Activated CD8-positive, alpha-beta T cell treated with anti-CD3 and anti-CD28 coated beads for 36 hours (primary cell): ENCODE measurements at regions of chr7 and their contacts with region 1.

Region 1: DNA sequence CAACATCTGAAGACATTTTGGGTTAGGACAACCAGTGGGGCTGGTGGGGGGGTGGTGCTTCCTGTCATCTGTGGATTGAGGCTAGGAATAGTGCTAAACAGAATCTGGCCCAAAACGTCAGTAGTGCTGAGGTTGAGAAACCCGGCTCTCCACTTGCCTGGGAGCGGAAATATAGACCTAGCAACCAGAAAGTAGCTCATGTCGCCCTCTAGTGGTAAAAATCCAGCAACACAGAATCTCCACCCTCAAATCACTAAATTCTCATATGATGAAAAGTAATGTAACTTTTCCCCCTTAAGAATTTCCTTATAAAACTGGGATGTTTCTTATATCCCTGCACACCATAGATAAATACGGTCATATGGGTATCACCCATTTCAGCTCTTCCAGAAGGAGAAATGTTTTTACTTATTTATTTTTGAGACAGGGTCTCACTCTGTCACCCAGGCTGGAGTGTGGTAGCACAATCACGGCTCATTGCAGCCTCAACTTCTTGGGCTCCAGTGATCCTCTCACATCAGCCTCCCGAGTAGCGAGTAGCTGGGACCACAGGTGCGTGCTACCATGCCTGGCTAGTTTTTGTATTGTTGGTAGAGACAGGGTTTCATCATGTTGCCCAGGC is 34.4 kb downstream of the ZC3HAV1 start:
- DNase-seq: peak; percentile 80
- ATAC-seq: peak; percentile 70
- H3K4me3 Mint-ChIP-seq: peak overlapping the region; percentile 37
- H3K27ac Mint-ChIP-seq: peak overlapping the region; percentile 85
- H3K4me1 Mint-ChIP-seq: peaks cover 62% of the 10 kb centered on the region
- H3K27me3 Mint-ChIP-seq: no peaks in the 10 kb centered on the region
- CTCF ChIP-seq: peak; percentile 80

Region 2: GRCh38 chr7:138954545-138955475 is 120.3 kb before region 1 on chr7:
- CTCF ChIA-PET with region 1: no interaction called
- POLR2A ChIA-PET with region 1: no interaction called
- intact Hi-C with region 1: no loop called
- DNase-seq: no peak
- ATAC-seq: no peak
- H3K4me3 Mint-ChIP-seq: no peak overlapping the region
- H3K27ac Mint-ChIP-seq: no peak overlapping the region
- H3K4me1 Mint-ChIP-seq: no peaks in the 10 kb centered on the region
- H3K27me3 Mint-ChIP-seq: peaks cover 1% of the 10 kb centered on the region
- CTCF ChIP-seq: no peak

Region 3: GRCh38 chr7:138999414-138999813 is 75.7 kb before region 1 on chr7:
- CTCF ChIA-PET with region 1: no interaction called
- POLR2A ChIA-PET with region 1: no interaction called
- intact Hi-C with region 1: no loop called
- DNase-seq: no peak
- ATAC-seq: no peak
- H3K4me3 Mint-ChIP-seq: no peak overlapping the region
- H3K27ac Mint-ChIP-seq: no peak overlapping the region
- H3K4me1 Mint-ChIP-seq: peaks cover 4% of the 10 kb centered on the region
- H3K27me3 Mint-ChIP-seq: no peaks in the 10 kb centered on the region
- CTCF ChIP-seq: no peak

Region 4: GRCh38 chr7:139016931-139017511 is 58.1 kb before region 1 on chr7:
- CTCF ChIA-PET with region 1: interaction called, 24 read pairs
- POLR2A ChIA-PET with region 1: no interaction called
- intact Hi-C with region 1: no loop called
- DNase-seq: peak; percentile 79
- ATAC-seq: peak; percentile 94
- H3K4me3 Mint-ChIP-seq: no peak overlapping the region
- H3K27ac Mint-ChIP-seq: no peak overlapping the region
- H3K4me1 Mint-ChIP-seq: peaks cover 6% of the 10 kb centered on the region
- H3K27me3 Mint-ChIP-seq: no peaks in the 10 kb centered on the region
- CTCF ChIP-seq: peak; percentile 77

Region 5: DNA sequence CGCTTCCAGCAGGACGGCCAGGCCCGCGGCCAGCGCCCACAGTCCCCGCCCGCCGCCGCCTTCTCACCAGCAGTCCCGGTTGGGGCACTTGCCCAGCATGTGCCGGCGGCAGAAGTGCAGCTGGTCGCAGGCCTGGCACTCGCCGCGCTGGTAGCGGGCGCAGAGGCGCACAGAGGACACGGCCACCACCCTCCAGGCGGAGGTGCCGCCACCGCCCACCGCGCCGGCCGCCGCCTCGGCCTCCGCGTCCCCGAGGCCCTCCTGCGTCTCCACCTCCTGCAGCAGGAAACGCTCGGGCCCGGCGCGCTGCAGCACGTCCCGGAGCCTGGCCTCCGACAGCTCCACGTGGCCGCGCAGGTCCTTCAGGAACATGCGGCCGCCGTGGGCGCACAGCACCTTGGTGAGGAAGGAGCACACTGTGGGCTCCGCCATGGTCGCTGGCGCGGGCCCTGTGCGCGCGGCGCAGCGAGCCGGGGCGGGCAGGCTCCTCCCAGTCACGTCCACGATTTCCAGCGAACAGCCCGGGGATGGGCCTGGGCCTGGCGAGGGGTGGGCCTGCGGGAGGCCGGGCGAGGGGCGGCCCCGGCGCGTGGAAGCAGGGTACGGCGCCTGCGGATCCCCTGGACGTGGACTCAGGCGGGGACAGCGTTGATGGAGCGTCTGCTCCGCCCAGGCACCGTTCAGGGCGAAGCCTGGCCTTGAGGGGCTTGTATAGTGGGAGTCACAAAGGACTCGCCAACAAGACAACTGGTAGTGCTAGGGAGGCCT is 39.4 kb before region 1 on chr7 and contains the start of gene ZC3HAV1L:
- CTCF ChIA-PET with region 1: interaction called, 17 read pairs
- POLR2A ChIA-PET with region 1: interaction called, 4 read pairs
- intact Hi-C with region 1: no loop called
- DNase-seq: peak; percentile 75
- ATAC-seq: peak; percentile 88
- H3K4me3 Mint-ChIP-seq: peak within 1 kb of the TSS; percentile 82
- H3K27ac Mint-ChIP-seq: peak within 1 kb of the TSS; percentile 88
- H3K4me1 Mint-ChIP-seq: peaks cover 19% of the 10 kb centered on the region
- H3K27me3 Mint-ChIP-seq: no peaks in the 10 kb centered on the region
- CTCF ChIP-seq: no peak
- total RNA-seq, gene ZC3HAV1L: 19.9 TPM

Region 6: GRCh38 chr7:139058943-139059342 is 16.2 kb before region 1 on chr7:
- CTCF ChIA-PET with region 1: interaction called, 43 read pairs
- POLR2A ChIA-PET with region 1: interaction called, 11 read pairs
- intact Hi-C with region 1: no loop called
- DNase-seq: no peak
- ATAC-seq: peak; percentile 24
- H3K4me3 Mint-ChIP-seq: no peak overlapping the region
- H3K27ac Mint-ChIP-seq: peak overlapping the region; percentile 80
- H3K4me1 Mint-ChIP-seq: peaks cover 55% of the 10 kb centered on the region
- H3K27me3 Mint-ChIP-seq: no peaks in the 10 kb centered on the region
- CTCF ChIP-seq: no peak

Region 7: GRCh38 chr7:139095194-139095659 is 20.1 kb after region 1 on chr7:
- CTCF ChIA-PET with region 1: interaction called, 35 read pairs
- POLR2A ChIA-PET with region 1: interaction called, 15 read pairs
- intact Hi-C with region 1: no loop called
- DNase-seq: peak; percentile 85
- ATAC-seq: peak; percentile 82
- H3K4me3 Mint-ChIP-seq: peak overlapping the region; percentile 76
- H3K27ac Mint-ChIP-seq: peak overlapping the region; percentile 95
- H3K4me1 Mint-ChIP-seq: peaks cover 83% of the 10 kb centered on the region
- H3K27me3 Mint-ChIP-seq: no peaks in the 10 kb centered on the region
- CTCF ChIP-seq: no peak